Activated T-helper 2 cell treated with anti-CD3 and anti-CD28 coated beads, Interferon-gamma antibody, Interleukin-2, Interleukin-4, amounts not matched to agents 10 μg/mL and 5 μg/mL and 100 μg/mL, durations not matched to agents 14 hours and 24 hours and 36 hours (primary cell): ENCODE measurements at regions of chr17 and their contacts with region 1.

Region 1: GRCh38 chr17:56939901-56940343 is 20.9 kb downstream of the COIL start:
- DNase-seq: no peak
- H3K4me3 Mint-ChIP-seq: no peak overlapping the region
- H3K27ac Mint-ChIP-seq: peak overlapping the region; percentile 65
- H3K4me1 Mint-ChIP-seq: peaks cover 25% of the 10 kb centered on the region
- H3K27me3 Mint-ChIP-seq: no peaks in the 10 kb centered on the region

Region 2: DNA sequence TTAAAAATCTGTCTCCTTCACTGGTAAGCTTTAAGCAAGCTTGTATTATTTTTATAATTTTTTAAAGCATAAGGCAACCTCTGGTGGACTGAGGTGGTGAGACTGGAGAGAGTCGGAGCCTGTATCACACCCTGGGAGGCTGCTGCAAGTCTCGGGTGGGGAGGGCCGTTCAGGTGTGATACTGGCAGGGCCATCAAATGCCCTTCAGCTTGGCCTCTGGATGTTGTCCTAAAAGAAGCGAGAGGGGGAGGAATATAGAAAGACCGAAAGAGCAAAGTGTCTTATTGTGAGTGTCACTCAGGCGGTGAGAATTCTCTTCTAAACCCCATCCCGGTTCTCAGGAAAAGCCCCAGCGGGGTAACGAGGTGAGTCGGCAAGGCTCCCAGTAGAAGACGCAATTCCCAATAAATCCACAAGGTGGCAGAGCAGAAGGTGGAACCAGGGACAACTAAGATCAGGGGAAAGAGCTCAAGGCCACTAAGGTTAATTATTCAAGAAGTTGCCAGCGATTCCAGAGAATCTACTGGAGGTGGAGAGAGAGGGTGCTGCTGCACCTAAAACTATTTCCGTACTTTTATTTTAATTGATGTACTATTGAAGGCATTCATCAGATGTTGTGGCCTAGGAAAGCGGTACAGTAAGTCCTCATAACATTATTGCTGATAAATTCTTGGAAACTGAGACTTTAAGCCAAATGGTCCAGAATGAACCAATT is 120.3 kb before region 1 on chr17:
- intact Hi-C with region 1: loop called (anchors 1 kb)
- DNase-seq: peak; percentile 63
- H3K4me3 Mint-ChIP-seq: no peak overlapping the region
- H3K27ac Mint-ChIP-seq: no peak overlapping the region
- H3K4me1 Mint-ChIP-seq: peaks cover 20% of the 10 kb centered on the region
- H3K27me3 Mint-ChIP-seq: no peaks in the 10 kb centered on the region

Region 3: DNA sequence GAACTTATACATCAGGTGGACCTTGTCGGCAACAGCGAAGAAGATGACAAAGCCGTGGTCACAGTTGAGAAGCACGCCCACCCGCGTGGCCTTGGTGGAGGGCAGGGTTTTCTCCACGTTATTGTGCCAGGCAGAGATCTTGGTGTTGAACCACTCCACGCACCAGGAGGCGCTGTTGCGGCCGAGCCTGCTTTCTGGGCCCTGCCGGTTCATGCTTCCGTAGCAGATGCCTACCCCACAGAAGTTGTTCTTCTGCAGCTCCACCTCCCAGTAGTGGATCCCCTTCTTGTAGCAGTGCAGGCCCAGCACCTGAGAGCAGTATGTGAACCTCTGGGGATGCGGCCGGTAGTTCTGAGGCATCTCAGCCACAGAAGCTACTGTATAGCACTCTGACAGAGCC is 48.1 kb before region 1 on chr17:
- intact Hi-C with region 1: loop called (anchors 1 kb)
- DNase-seq: peak; percentile 23
- H3K4me3 Mint-ChIP-seq: no peak overlapping the region
- H3K27ac Mint-ChIP-seq: no peak overlapping the region
- H3K4me1 Mint-ChIP-seq: peaks cover 9% of the 10 kb centered on the region
- H3K27me3 Mint-ChIP-seq: no peaks in the 10 kb centered on the region